Dorsolateral prefrontal cortex (tissue), 120 donors: ENCODE measurements at regions of chr4 and their contacts with region 1.

Region 1: DNA sequence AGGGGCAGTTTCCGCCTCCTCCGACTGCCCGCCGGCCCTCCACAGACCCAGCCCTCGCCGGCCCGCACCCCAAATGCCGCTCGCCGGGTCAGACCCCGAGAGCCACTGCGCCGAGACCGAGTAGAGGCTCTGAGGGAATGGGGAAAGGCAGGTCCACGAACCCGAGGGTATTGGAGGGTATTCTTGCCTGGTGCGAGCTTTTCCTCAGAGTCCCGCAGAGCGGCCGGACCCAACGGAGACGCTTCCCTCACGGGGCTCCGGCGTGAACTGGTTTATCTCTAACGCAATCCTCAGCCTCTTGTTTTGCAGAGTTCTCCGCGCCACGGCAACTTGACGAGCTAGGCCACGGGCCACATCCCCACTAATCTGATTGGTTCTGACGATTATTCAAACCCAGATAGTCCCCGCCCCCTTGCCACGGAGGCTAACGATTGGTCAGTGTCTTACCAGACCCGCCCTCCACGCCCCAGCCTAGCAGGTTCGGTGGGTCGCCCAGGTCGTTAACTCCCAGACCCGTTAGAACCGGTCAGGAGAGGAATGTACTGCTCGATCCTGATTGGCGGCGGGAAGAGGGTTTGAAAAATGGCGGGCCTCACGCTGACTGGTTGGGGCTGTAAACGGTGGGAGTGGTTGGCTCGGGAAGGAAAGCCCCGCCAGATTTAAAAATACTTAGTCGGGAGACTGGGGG is at the start of gene HMGB2:
- DNase-seq: peak; percentile 99 to 100 (median 100)
- H3K4me3 ChIP-seq: peak within 1 kb of the TSS; percentile 67 to 100 (median 93)
- H3K27ac ChIP-seq: peak within 1 kb of the TSS; percentile 68 to 100 (median 98)
- H3K27me3 ChIP-seq: no peaks in the 10 kb centered on the region
- CTCF ChIP-seq: peak in 9 of 56 donors; percentile 3 to 30 (median 14)
- total RNA-seq, gene HMGB2: 21.0 to 95.1 (median 33.9) TPM

Region 2: DNA sequence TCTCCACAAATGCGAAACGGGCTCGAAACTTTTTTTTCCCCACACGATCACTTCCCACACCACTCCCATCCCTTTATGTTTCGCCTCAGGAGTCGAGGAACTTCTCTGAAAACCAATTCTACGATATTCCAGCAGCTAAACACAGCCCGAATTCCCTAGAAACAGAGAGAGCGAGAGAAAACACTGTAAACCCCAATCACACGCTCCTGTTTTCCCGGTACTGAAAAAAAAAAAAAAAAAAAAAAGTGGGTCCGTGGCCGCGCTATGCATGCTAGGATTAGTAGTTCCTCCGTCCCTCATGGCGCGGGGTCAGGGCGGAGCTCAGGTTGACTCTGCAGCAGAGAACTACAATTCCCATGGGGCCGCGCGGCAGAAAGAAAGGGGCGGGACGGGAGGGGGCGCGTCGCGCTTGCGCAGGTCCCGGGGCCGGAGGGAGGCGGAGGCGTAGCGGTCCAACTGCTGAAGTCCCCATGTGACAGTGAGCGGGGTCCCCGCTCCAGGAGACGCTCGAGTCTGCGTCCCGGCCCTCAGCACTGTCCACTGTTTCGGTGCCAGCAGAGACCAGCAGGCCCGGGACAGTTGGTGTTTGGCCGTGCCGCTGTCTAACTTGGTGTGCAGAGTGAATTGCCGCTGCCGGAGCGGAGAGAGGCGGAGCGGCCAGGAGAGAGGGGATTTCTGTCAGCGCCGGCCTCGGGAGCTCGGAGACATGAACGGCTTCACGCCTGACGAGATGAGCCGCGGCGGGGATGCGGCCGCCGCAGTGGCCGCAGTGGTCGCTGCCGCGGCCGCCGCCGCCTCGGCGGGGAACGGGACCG is 36.5 kb after region 1 on chr4 and contains the start of gene SAP30:
- intact Hi-C with region 1: loop called (anchors 1 kb)
- DNase-seq: peak; percentile 95 to 98 (median 97)
- H3K4me3 ChIP-seq: peak within 1 kb of the TSS; percentile 62 to 93 (median 84)
- H3K27ac ChIP-seq: peak within 1 kb of the TSS; percentile 90 to 100 (median 98)
- H3K27me3 ChIP-seq: no peaks in the 10 kb centered on the region
- CTCF ChIP-seq: peak in 9 of 56 donors; percentile 10 to 27 (median 15)
- total RNA-seq, gene SAP30: 15.2 to 36.3 (median 25.7) TPM

Region 3: GRCh38 chr4:173413036-173413435 is 78.8 kb after region 1 on chr4:
- intact Hi-C with region 1: loop called (anchors 5 kb)
- DNase-seq: peak in 1 of 10 donors; percentile 49
- H3K4me3 ChIP-seq: no peak overlapping the region
- H3K27ac ChIP-seq: peak overlapping the region in 43 of 59 donors; percentile 2 to 89 (median 59)
- H3K27me3 ChIP-seq: no peaks in the 10 kb centered on the region
- CTCF ChIP-seq: no peak